ENCODE measurements at regions of chr3 and their contacts with region 1.

Region 1: GRCh38 chr3:64224826-64225610 is at the start of gene PRICKLE2:
- DNase-seq: peak; percentile 35
- ATAC-seq: peak; percentile 90
- H3K4me3 ChIP-seq: no peak within 1 kb of the TSS
- H3K27ac ChIP-seq: no peak within 1 kb of the TSS
- H3K4me1 ChIP-seq: no peaks in the 10 kb centered on the region; the same call in 1 of the 2 replicates
- H3K27me3 ChIP-seq: no peaks in the 10 kb centered on the region
- CTCF ChIP-seq: no peak; a peak in 1 of 6 replicates
- EP300 ChIP-seq: no peak
- POLR2A ChIP-seq: 0 out of 2 replicates have a peak, but pooled peaks have one; percentile 36
- RAD21 ChIP-seq: peak; percentile 7; the same call in 1 of the 2 replicates
- polyA plus RNA-seq, gene PRICKLE2: 0.11 to 0.24 TPM

Region 2: GRCh38 chr3:63954182-63954581 is 270.8 kb before region 1 on chr3:
- CTCF ChIA-PET with region 1: no interaction called
- POLR2A ChIA-PET with region 1: no interaction called
- RAD21 ChIA-PET with region 1: no interaction called
- SMC1A ChIA-PET with region 1: no interaction called
- in situ Hi-C with region 1: no loop called
- intact Hi-C with region 1: no loop called
- DNase-seq: no peak
- ATAC-seq: no peak
- H3K4me3 ChIP-seq: no peak overlapping the region
- H3K27ac ChIP-seq: no peak overlapping the region
- H3K4me1 ChIP-seq: peaks cover 7% of the 10 kb centered on the region; the same call in 1 of the 2 replicates
- H3K27me3 ChIP-seq: no peaks in the 10 kb centered on the region
- CTCF ChIP-seq: no peak
- EP300 ChIP-seq: no peak
- POLR2A ChIP-seq: no peak
- RAD21 ChIP-seq: no peak

Region 3: GRCh38 chr3:63970631-63971475 is 254.2 kb before region 1 on chr3:
- CTCF ChIA-PET with region 1: no interaction called
- POLR2A ChIA-PET with region 1: no interaction called
- RAD21 ChIA-PET with region 1: no interaction called
- SMC1A ChIA-PET with region 1: no interaction called
- in situ Hi-C with region 1: no loop called
- intact Hi-C with region 1: no loop called
- DNase-seq: no peak
- ATAC-seq: no peak
- H3K4me3 ChIP-seq: no peak overlapping the region
- H3K27ac ChIP-seq: peak overlapping the region; percentile 45
- H3K4me1 ChIP-seq: peaks cover 31% of the 10 kb centered on the region
- H3K27me3 ChIP-seq: no peaks in the 10 kb centered on the region
- CTCF ChIP-seq: no peak
- EP300 ChIP-seq: no peak
- POLR2A ChIP-seq: no peak
- RAD21 ChIP-seq: no peak

Region 4: DNA sequence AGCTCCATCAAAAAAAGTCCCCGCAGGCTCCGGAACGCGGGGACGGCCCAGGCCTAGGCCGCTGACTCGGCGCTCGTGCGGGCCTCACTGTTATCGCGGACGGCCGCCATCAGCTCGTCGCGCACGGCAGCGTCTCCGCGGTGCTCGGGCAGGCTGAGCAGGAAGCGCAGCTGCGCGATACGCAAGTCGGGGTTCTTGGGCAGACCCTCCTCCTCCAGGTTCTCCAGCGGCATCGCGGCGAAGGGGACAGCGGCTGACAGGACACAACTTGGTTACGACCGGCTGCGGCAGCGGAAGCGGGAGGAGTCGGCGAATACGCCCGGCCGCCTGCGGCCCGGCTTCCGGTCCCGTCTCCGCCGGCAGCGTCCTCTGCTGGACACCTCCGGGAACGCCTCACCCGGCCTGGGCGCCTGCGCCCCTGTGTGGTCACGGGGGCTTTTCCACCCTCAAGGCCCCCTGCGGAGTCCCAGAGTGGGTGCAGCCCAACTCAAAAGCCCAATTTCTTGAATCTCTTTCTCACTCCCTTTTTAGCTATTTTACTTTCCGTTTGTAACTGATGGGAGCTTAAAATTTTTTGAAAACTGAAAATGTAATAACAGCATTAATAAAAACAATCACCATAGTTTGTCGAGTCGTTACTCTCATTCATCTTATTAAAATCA is 201.7 kb before region 1 on chr3 and contains the start of gene PSMD6:
- CTCF ChIA-PET with region 1: interaction called, 6 read pairs
- POLR2A ChIA-PET with region 1: no interaction called
- RAD21 ChIA-PET with region 1: no interaction called
- SMC1A ChIA-PET with region 1: interaction called, 12 read pairs
- in situ Hi-C with region 1: no loop called
- intact Hi-C with region 1: no loop called
- DNase-seq: peak; percentile 49
- ATAC-seq: peak; percentile 95
- H3K4me3 ChIP-seq: peak within 1 kb of the TSS; percentile 86
- H3K27ac ChIP-seq: peak within 1 kb of the TSS; percentile 87
- H3K4me1 ChIP-seq: no peaks in the 10 kb centered on the region
- H3K27me3 ChIP-seq: no peaks in the 10 kb centered on the region
- CTCF ChIP-seq: peak; percentile 99 to 100 (median 100); a peak in 5 of 6 replicates
- EP300 ChIP-seq: 0 out of 4 replicates have a peak, but pooled peaks of 1 of the 2 experiments have one; percentile 18
- POLR2A ChIP-seq: peak; percentile 97
- RAD21 ChIP-seq: peak; percentile 28; the same call in 1 of the 2 replicates
- polyA plus RNA-seq, gene PSMD6: 84.3 to 124 TPM

Region 5: DNA sequence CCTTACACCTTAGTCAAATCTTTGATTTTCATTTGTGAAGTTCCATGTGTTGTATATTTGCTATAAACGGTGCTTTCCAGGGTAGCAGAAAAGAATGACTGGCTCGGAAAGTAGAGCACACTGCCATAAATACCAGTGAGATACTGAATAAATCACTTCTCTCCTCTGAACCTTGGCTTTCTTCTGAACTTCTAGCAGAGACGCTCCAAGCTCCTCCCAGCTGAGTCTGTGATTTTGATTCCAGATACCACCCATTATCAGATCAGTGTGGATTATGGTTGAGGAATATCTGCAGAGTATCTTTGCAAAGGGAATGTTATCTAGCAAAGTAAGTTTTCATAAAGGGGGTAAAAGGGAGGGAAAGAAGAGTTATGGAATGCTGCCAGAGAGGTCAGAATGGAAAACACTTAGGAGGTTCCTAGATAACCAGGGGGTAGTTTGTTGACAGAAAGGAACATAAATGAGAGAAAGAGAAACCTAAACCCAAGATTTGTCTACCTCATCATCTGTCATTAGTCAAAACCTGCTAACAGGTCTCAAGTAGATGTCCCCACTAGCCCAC is 103.2 kb before region 1 on chr3:
- CTCF ChIA-PET with region 1: no interaction called
- POLR2A ChIA-PET with region 1: no interaction called
- RAD21 ChIA-PET with region 1: no interaction called
- SMC1A ChIA-PET with region 1: no interaction called
- in situ Hi-C with region 1: no loop called
- intact Hi-C with region 1: no loop called
- DNase-seq: no peak
- ATAC-seq: no peak; the same call in 2 of the 3 replicates
- H3K4me3 ChIP-seq: no peak overlapping the region
- H3K27ac ChIP-seq: no peak overlapping the region
- H3K4me1 ChIP-seq: no peaks in the 10 kb centered on the region
- H3K27me3 ChIP-seq: no peaks in the 10 kb centered on the region
- CTCF ChIP-seq: no peak
- EP300 ChIP-seq: no peak
- POLR2A ChIP-seq: no peak
- RAD21 ChIP-seq: no peak

Region 6: DNA sequence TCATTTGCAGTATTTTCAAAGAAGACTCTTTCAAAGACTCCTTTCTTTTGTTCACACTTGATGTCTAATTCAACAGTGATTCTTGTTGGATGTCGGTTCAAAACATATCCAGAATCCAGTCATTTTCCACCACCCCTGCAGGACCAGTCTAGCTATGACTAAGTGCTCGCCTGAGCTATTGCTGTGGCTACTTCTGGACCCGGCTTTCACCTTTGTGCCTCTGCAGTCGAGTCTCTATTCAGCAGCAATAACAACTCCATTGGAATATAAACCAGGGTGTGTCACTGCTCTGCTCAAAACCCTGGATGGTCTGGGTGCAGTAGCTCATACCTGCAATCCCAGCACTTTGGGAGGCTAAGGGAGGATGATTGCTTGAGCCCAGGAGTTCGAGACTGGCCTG is 54.7 kb before region 1 on chr3:
- CTCF ChIA-PET with region 1: interaction called, 14 read pairs
- POLR2A ChIA-PET with region 1: no interaction called
- RAD21 ChIA-PET with region 1: interaction called, 4 read pairs
- SMC1A ChIA-PET with region 1: interaction called, 17 read pairs
- in situ Hi-C with region 1: no loop called
- intact Hi-C with region 1: no loop called
- DNase-seq: no peak
- ATAC-seq: no peak
- H3K4me3 ChIP-seq: no peak overlapping the region
- H3K27ac ChIP-seq: no peak overlapping the region
- H3K4me1 ChIP-seq: no peaks in the 10 kb centered on the region
- H3K27me3 ChIP-seq: no peaks in the 10 kb centered on the region
- CTCF ChIP-seq: no peak
- EP300 ChIP-seq: no peak
- POLR2A ChIP-seq: no peak
- RAD21 ChIP-seq: no peak

Region 7: DNA sequence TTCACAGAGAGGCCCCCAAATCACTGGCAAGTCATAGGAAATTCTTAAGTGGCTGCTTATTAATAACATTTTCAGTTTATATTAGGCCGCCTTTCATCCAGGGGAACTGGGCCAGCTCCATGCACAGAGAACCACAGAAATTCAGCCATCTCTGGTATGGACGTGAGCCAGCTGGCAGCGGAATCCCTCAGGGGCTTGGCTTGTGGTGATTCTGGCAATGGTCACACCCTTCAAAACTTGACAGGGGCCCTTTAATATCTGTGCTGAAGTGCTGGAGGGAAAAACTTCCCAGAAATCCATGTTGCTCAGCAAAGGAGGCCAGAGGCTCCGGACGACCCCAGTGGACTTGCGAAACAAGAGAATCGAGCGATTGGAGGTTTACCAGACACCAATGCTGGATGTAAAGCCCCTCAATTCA is 11.0 kb before region 1 on chr3:
- CTCF ChIA-PET with region 1: interaction called, 28 read pairs
- POLR2A ChIA-PET with region 1: interaction called, 4 read pairs
- RAD21 ChIA-PET with region 1: interaction called, 17 read pairs
- SMC1A ChIA-PET with region 1: interaction called, 30 read pairs
- in situ Hi-C with region 1: no loop called
- intact Hi-C with region 1: no loop called
- DNase-seq: no peak
- ATAC-seq: no peak
- H3K4me3 ChIP-seq: no peak overlapping the region
- H3K27ac ChIP-seq: no peak overlapping the region
- H3K4me1 ChIP-seq: no peaks in the 10 kb centered on the region
- H3K27me3 ChIP-seq: no peaks in the 10 kb centered on the region; a peak in 1 of 4 replicates
- CTCF ChIP-seq: no peak
- EP300 ChIP-seq: no peak
- POLR2A ChIP-seq: no peak
- RAD21 ChIP-seq: no peak

Region 8: GRCh38 chr3:64255516-64256315 is 30.7 kb after region 1 on chr3:
- CTCF ChIA-PET with region 1: interaction called, 28 read pairs
- POLR2A ChIA-PET with region 1: interaction called, 3 read pairs
- RAD21 ChIA-PET with region 1: interaction called, 5 read pairs
- SMC1A ChIA-PET with region 1: interaction called, 35 read pairs
- in situ Hi-C with region 1: no loop called
- intact Hi-C with region 1: no loop called
- DNase-seq: no peak
- ATAC-seq: no peak
- H3K4me3 ChIP-seq: no peak overlapping the region
- H3K27ac ChIP-seq: no peak overlapping the region
- H3K4me1 ChIP-seq: no peaks in the 10 kb centered on the region
- H3K27me3 ChIP-seq: no peaks in the 10 kb centered on the region
- CTCF ChIP-seq: no peak
- EP300 ChIP-seq: no peak
- POLR2A ChIP-seq: no peak
- RAD21 ChIP-seq: no peak

Region 9: DNA sequence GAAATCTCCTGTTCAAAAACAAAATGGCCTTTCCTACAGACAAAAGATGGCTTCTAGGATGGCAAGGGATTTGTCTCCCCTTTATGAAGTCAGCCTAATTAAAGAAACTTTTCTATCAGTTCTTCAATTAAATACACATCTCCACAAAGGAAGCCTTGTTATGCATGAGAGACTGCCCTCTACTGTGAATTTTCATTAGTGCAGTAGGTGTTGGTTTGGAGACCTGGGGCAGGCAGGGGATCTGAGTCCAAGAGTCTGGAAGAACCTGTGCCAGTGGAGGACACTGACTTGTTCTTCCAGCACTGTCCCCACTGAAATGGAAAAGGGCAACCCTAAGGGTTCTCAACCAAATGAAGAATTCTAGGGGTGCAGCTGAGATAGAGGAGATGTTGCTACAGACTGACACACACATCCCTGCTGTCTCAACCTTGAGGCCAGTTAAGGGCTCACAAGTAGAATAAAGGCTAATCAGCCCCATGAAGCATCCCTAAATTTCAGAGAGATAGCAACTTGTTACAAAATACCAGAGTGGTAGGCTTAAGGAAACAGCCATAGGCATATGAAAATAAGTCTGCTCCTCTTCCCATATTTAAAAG is 174.3 kb after region 1 on chr3:
- CTCF ChIA-PET with region 1: interaction called, 37 read pairs
- POLR2A ChIA-PET with region 1: no interaction called
- RAD21 ChIA-PET with region 1: interaction called, 20 read pairs
- SMC1A ChIA-PET with region 1: interaction called, 86 read pairs
- in situ Hi-C with region 1: no loop called
- intact Hi-C with region 1: no loop called
- DNase-seq: no peak
- ATAC-seq: peak; percentile 77
- H3K4me3 ChIP-seq: no peak overlapping the region
- H3K27ac ChIP-seq: no peak overlapping the region
- H3K4me1 ChIP-seq: no peaks in the 10 kb centered on the region
- H3K27me3 ChIP-seq: no peaks in the 10 kb centered on the region
- CTCF ChIP-seq: peak; percentile 58 to 65 (median 60); a peak in 5 of 6 replicates
- EP300 ChIP-seq: no peak
- POLR2A ChIP-seq: no peak
- RAD21 ChIP-seq: peak; percentile 78

Measured in GM12878 (cell line).